Ascending aorta (tissue), 2 donors: ENCODE measurements at regions of chr6 and their contacts with region 1.

Region 1: GRCh38 chr6:159595173-159595572 is 97.9 kb downstream of the SOD2 start:
- DNase-seq: peak; percentile 22 to 87
- H3K4me3 ChIP-seq: peak overlapping the region in 1 of 2 donors; percentile 24
- H3K27ac ChIP-seq: peak overlapping the region; percentile 89 to 90
- H3K4me1 ChIP-seq: peaks cover 3 to 13% of the 10 kb centered on the region in 2 donors
- H3K27me3 ChIP-seq: no peaks in the 10 kb centered on the region
- CTCF ChIP-seq: no peak

Region 2: DNA sequence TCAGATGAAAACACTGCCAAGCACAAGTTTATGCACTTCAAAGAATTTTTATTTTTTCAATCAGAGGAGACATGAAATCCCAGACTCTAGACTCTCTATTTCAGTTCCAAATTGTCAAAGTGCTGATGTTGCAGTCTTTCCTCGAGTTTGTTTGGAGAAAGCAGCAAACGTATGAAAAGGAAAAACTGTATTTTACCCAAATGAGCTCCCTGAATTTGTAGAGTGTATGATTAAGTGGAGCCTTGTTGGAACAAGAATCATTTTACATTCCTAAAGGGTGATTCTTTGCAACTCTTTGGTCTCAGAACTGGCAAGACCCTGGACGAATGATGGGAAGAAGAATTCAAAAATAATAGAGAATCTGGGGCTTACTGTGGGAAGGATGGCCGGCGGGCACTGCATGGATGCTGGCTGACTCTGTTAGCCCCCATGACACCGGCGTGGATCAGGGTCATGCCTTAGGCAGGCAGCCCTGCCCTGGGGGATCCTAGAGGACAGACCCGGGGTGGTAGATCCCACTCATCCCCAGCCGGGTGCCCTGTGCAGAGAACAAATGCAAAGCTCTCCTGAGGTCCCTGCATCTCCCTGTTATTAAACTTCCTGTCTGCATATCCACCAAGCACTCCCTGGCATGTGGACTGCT is 218.5 kb before region 1 on chr6:
- intact Hi-C with region 1: loop called (anchors 5 kb)
- DNase-seq: no peak
- H3K4me3 ChIP-seq: peak overlapping the region in 1 of 2 donors; percentile 20
- H3K27ac ChIP-seq: peak overlapping the region; percentile 68 to 73
- H3K4me1 ChIP-seq: peaks cover 5 to 41% of the 10 kb centered on the region in 2 donors
- H3K27me3 ChIP-seq: no peaks in the 10 kb centered on the region
- CTCF ChIP-seq: no peak

Region 3: GRCh38 chr6:159505140-159505922 is 89.8 kb before region 1 on chr6:
- intact Hi-C with region 1: loop called (anchors 5 kb)
- DNase-seq: peak; percentile 52 to 78
- H3K4me3 ChIP-seq: no peak overlapping the region
- H3K27ac ChIP-seq: peak overlapping the region; percentile 72 to 75
- H3K4me1 ChIP-seq: peaks cover 0 to 7% of the 10 kb centered on the region in 2 donors
- H3K27me3 ChIP-seq: no peaks in the 10 kb centered on the region
- CTCF ChIP-seq: no peak

Region 4: DNA sequence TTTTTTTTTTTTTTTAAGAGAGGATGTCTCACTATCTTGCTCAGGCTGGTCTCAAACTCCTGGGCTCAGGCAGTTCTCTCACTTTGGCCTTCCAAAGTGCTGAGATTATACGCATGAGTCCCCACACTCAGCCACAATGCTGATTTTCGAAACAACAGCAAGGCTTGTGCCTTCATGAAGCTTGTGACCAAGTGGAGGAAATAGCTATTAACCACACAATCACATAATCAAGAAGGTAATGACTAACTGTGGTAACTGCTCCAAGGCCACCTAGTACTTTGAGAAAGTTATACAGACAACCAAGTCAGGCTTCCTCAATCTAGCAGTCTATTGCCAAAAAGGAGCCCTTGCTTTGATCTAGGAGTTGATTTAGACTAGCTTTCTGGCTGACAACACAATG is 51.6 kb after region 1 on chr6:
- intact Hi-C with region 1: loop called (anchors 5 kb)
- DNase-seq: no peak
- H3K4me3 ChIP-seq: no peak overlapping the region
- H3K27ac ChIP-seq: no peak overlapping the region
- H3K4me1 ChIP-seq: no peaks in the 10 kb centered on the region
- H3K27me3 ChIP-seq: no peaks in the 10 kb centered on the region
- CTCF ChIP-seq: no peak